ENCODE measurements at regions of chr10 and their contacts with region 1.

Region 1: GRCh38 chr10:2099321-2099720 is 362.0 kb upstream of the ADARB2 start:
- DNase-seq: no peak

Region 2: DNA sequence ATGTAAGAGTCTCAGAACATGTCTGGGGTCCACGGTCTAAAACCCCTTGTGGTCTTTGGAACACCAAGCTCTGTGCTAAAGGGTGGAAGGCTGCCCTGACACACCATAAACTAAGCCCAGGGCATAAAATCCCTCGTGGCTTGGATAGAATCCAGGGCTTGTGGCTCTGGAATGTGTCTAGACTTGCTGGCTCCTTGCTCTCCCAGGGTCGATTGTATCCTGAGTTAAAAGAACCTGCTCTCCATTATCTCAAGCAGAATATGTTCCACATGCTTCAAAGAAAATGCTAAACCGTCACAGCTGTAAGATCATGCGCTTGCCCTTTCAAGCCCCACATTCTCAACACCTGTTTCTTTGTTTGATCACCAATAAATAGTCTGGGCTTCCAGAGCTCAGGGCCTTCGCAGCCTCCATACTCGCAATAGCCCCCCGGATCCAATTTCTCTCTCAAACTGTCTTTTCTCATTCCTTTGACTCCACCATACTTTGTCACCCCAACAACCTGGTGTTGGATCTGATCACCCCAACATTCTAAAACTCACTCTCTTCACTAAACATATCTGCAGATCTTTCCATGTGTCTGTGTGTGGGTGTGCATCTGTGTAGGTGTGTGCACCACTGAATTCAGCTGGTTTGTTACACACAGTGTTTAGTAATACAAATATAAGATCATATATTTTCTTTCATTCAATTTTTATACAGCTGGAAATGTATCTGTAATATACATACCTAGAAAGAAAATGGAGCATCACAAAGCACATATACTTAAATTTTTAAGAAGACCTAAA is 1725.6 kb before region 1 on chr10:
- intact Hi-C with region 1: no loop called
- DNase-seq: no peak

Region 3: DNA sequence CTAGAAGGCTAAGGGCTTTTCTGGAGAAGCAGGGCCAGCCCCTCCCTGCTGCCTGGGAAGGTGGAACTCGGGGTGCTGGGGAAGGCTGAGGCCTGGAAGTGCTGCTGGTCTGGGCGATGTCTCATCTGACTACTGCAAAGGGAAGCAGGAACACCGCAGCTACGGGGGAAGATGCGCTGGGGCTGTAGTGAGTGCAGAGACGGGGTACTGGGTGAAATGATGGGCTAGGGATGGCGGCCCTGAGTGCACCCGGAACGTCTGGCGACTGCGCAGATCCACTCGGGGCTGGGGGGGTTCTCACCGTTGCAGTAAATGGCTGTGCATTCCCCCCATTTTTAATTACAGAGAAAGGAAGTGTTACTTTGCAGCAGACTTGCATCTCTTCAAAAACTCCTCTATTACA is 166.6 kb before region 1 on chr10:
- intact Hi-C with region 1: loop called in 1 of 2 experiments (anchors 5 kb)
- DNase-seq: no peak

Region 4: DNA sequence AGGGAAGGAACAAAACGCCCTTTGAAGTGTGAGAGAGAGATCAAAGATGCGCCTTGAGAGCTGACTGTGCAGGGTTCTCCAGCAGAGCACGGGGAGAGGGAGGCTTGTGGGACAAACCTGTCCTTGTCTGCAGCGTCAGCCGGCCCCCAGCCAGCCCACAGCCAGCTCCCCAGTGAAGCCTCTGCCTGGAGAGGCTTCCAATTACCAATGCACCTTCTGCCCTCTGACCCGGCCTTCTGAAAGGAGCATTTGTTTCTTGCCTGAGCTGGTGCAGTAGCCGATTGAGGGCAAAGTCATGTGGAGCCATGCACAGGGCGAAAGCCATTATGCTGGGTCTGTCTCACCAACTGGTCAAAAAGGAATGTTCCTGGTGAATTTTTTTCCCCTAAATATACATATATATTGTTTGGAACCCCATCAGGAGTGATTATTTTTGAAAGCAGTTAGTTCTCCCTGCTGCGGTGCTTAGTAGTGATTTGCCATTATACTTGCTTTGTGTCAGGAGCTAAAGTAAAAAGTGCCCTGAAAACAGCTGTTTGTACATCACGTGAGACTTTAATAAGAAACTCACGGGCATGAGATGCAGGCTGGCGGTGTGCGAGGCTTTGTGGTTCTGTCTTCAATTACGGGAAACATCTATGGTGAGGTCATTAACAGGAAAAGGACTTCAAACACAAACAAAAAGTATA is 1417.1 kb after region 1 on chr10:
- intact Hi-C with region 1: no loop called
- DNase-seq: no peak

Measured in posterior vena cava (tissue), 2 donors.